ENCODE measurements at regions of chr14 and their contacts with region 1.

Region 1: DNA sequence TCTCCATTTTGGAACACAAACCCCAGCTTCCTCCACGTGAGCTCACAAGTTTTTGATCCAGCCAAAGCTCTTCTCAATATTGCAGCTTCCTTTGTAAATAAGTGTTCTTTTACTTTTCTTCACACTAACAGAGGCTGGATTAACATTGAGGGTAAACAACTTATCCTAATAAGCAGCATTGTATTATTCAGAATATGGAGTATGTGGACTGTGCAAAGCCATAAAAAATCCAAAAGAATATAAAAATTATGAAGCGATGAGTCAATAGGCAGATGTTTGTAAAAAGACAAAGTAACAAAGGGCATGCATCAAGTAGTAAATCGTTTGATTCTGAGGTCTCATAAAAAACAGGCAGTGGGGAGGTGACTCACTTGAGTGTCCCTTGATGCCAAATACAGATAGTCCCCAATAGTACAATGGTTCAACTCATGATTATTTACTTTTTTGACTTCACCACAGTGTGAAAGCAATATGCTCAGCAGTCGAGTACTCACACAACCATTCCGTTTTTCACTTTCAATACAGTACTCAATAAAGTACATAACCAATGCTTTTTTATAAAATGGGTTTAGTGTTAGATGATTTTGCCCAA is 23.1 kb upstream of the KCNK10 start:
- DNase-seq: peak; percentile 96
- ATAC-seq: peak; percentile 94
- H3K4me3 ChIP-seq: peak overlapping the region; percentile 50
- H3K27ac ChIP-seq: peak overlapping the region; percentile 98
- H3K4me1 ChIP-seq: peaks cover 35% of the 10 kb centered on the region
- H3K27me3 ChIP-seq: no peaks in the 10 kb centered on the region
- CTCF ChIP-seq: no peak

Region 2: DNA sequence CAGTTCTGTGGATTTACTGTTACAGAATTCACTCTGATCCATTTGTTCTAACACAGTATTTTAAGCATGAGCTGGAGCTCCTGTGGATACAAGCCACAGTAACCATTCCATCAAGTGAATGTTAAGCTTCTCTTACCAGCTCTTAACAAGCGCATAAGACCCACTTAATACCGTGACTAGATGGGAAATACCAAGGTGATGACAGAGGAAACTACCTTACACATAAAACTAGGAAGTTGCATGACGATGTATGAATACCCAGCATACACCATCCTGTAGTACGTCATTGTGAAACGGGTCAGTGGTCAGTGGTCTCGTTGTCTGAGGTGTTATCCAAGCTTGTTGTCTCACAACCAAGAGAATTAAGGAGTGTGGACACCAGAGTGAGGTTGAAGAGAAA is 351.2 kb before region 1 on chr14:
- CTCF ChIA-PET with region 1: no interaction called
- POLR2A ChIA-PET with region 1: no interaction called
- intact Hi-C with region 1: no loop called
- DNase-seq: no peak
- ATAC-seq: no peak
- H3K4me3 ChIP-seq: no peak overlapping the region
- H3K27ac ChIP-seq: no peak overlapping the region
- H3K4me1 ChIP-seq: no peaks in the 10 kb centered on the region
- H3K27me3 ChIP-seq: no peaks in the 10 kb centered on the region
- CTCF ChIP-seq: no peak

Region 3: DNA sequence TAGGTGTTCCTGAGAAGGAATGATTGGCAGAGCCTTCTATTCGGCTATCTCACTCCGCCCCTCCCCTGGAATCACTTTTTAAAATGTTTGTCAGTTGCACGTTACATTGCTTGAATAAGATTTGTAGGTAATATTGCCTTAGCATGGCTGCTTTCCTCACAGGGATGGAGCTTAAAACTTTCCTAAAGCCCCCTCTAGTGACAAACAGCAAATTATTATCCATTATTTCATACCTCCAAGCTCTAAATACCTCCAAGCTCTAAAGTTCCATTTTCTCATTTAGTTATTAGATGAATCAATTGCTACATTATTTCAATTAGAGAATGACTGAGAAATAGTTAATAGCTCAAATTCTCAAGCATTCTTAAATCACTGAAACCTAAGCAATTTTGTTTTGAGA is 34.3 kb after region 1 on chr14:
- CTCF ChIA-PET with region 1: no interaction called
- POLR2A ChIA-PET with region 1: no interaction called
- intact Hi-C with region 1: loop called (anchors 5 kb)
- DNase-seq: peak; percentile 61
- ATAC-seq: peak; percentile 63
- H3K4me3 ChIP-seq: no peak overlapping the region
- H3K27ac ChIP-seq: no peak overlapping the region
- H3K4me1 ChIP-seq: peaks cover 9% of the 10 kb centered on the region; the same call in 1 of the 2 replicates
- H3K27me3 ChIP-seq: no peaks in the 10 kb centered on the region
- CTCF ChIP-seq: peak; percentile 73

Region 4: GRCh38 chr14:88437658-88438057 is 91.5 kb after region 1 on chr14:
- CTCF ChIA-PET with region 1: no interaction called
- POLR2A ChIA-PET with region 1: no interaction called
- intact Hi-C with region 1: no loop called
- DNase-seq: peak; percentile 25
- ATAC-seq: no peak
- H3K4me3 ChIP-seq: no peak overlapping the region
- H3K27ac ChIP-seq: no peak overlapping the region
- H3K4me1 ChIP-seq: peaks cover 4% of the 10 kb centered on the region
- H3K27me3 ChIP-seq: no peaks in the 10 kb centered on the region
- CTCF ChIP-seq: peak; percentile 74